Mammary epithelial cell (primary cell): ENCODE measurements at regions of chr11 and their contacts with region 1.

Region 1: DNA sequence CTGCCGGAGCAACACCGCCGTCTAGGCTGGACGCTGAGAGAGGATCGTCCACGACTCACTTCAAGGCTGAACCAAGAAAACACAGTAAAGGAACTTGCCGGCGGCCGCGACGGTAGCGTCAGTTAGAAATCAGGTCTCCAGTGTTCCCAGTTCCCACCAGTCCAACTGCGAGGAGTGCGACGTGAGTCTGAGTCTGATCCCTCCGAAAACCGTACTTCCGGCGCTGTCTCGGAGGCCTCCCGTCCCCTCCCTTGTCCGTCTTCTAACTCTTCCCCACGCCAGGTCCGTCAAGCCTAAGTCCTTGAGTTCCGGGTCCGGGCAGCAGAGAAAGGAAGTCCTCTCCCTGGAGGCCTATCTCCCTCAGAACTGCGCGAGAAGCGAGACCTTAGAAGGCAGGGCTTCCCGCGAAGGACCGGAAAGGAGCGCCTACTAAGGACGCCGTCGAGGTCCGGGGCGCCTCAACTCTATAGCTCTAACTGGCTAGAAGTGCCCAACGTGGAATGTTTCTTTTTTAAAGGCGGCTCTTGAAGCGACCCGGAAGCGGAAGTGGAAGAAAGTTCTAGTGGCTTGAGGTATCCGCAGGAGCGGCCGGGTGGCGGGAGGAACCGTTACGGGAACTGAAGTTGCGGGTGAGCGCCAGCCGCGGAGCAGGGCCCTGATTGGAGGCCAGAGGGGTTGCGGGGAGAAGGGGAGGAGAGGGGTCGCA is at the starts of genes BANF1 and EIF1AD:
- DNase-seq: peak; percentile 99
- H3K4me3 ChIP-seq: peak within 1 kb of the TSS; percentile 76 to 98 (median 86)
- H3K27ac ChIP-seq: peak within 1 kb of the TSS; percentile 82
- H3K4me1 ChIP-seq: peaks cover 15% of the 10 kb centered on the region
- H3K27me3 ChIP-seq: no peaks in the 10 kb centered on the region
- CTCF ChIP-seq: no peak
- total RNA-seq, gene BANF1: 22.8 to 174 TPM
- total RNA-seq, gene EIF1AD: 26.8 to 36.9 TPM

Region 2: DNA sequence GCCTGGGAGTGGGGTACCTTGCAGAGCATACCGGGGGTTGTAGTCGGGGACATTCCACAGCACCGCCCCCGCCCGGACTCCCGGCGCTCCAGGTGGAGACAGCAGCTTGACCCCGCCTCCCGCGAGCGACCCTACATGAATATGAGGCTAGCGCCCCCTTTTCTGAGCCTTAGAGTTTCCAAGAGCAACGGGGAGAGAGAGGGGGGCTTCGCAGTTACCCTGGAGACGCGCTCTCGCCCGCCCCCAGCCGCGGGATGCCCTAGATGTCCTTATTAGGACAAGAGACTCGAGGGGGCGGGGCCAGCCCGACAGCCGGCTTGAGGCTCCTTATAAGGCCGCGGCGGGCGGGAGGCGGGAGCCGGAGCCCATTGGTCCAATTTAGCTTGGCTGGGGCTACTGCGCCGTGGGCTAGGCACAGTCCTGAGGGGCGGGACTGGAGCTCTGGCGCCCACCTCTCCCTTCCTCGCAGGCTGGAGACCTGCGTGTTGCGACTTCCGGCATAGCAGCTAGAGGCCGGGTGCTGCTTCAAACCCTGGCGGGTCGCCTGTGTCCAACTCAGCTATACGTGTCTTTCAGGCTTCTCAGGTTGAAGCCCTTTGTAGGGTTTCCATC is 142.8 kb before region 1 on chr11:
- CTCF ChIA-PET with region 1: no interaction called
- dilution Hi-C with region 1: no loop called
- in situ Hi-C with region 1: no loop called
- intact Hi-C with region 1: loop called (anchors 1 kb)
- DNase-seq: peak; percentile 93
- H3K4me3 ChIP-seq: peak overlapping the region; percentile 76 to 97 (median 84)
- H3K27ac ChIP-seq: peak overlapping the region; percentile 70
- H3K4me1 ChIP-seq: peaks cover 35% of the 10 kb centered on the region
- H3K27me3 ChIP-seq: no peaks in the 10 kb centered on the region
- CTCF ChIP-seq: no peak

Region 3: GRCh38 chr11:66022401-66023185 is 20.5 kb after region 1 on chr11:
- CTCF ChIA-PET with region 1: no interaction called
- dilution Hi-C with region 1: no loop called
- in situ Hi-C with region 1: no loop called
- intact Hi-C with region 1: loop called (anchors 1 kb)
- DNase-seq: peak; percentile 43
- H3K4me3 ChIP-seq: peak overlapping the region in 1 of 3 experiments; percentile 9
- H3K27ac ChIP-seq: no peak overlapping the region
- H3K4me1 ChIP-seq: peaks cover 17% of the 10 kb centered on the region
- H3K27me3 ChIP-seq: no peaks in the 10 kb centered on the region
- CTCF ChIP-seq: peak; percentile 79 to 92

Region 4: GRCh38 chr11:66051766-66052663 is 49.9 kb after region 1 on chr11 and contains the start of gene SF3B2:
- CTCF ChIA-PET with region 1: interaction called, 3 read pairs
- dilution Hi-C with region 1: no loop called
- in situ Hi-C with region 1: no loop called
- intact Hi-C with region 1: loop called (anchors 1 kb)
- DNase-seq: peak; percentile 99
- H3K4me3 ChIP-seq: peak within 1 kb of the TSS; percentile 79 to 95 (median 83)
- H3K27ac ChIP-seq: peak within 1 kb of the TSS; percentile 73
- H3K4me1 ChIP-seq: peaks cover 24% of the 10 kb centered on the region
- H3K27me3 ChIP-seq: no peaks in the 10 kb centered on the region
- CTCF ChIP-seq: peak in 1 of 2 donors; percentile 5
- total RNA-seq, gene SF3B2: 128 to 189 TPM

Region 5: DNA sequence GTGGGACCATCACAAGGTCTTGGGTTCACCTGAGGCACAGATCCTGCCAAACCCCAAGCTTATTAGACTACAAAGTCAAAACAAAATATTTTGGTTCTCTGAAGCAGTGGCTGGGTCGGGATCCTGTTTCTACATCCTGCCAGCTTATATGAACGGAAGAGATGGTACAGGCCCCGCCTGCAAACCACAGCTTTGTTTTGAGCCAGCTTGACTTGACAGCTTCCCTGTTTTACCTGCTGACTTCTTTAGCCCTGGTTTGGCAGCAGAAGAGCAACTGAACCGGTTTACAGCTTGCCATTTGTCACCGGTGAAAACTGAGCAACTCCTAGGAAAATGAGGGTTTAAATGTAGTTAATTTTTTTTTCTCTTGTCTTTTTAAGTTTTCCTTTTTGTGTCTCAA is 79.4 kb after region 1 on chr11:
- CTCF ChIA-PET with region 1: interaction called, 21 read pairs
- dilution Hi-C with region 1: no loop called
- in situ Hi-C with region 1: no loop called
- intact Hi-C with region 1: no loop called
- DNase-seq: peak; percentile 77
- H3K4me3 ChIP-seq: no peak overlapping the region
- H3K27ac ChIP-seq: peak overlapping the region; percentile 43
- H3K4me1 ChIP-seq: peaks cover 21% of the 10 kb centered on the region
- H3K27me3 ChIP-seq: no peaks in the 10 kb centered on the region
- CTCF ChIP-seq: no peak